ENCODE measurements at regions of chr20 and their contacts with region 1.

Region 1: GRCh38 chr20:297098-297924 is at the start of gene ZCCHC3:
- DNase-seq: peak; percentile 91
- CTCF ChIP-seq: peak; percentile 25

Region 2: DNA sequence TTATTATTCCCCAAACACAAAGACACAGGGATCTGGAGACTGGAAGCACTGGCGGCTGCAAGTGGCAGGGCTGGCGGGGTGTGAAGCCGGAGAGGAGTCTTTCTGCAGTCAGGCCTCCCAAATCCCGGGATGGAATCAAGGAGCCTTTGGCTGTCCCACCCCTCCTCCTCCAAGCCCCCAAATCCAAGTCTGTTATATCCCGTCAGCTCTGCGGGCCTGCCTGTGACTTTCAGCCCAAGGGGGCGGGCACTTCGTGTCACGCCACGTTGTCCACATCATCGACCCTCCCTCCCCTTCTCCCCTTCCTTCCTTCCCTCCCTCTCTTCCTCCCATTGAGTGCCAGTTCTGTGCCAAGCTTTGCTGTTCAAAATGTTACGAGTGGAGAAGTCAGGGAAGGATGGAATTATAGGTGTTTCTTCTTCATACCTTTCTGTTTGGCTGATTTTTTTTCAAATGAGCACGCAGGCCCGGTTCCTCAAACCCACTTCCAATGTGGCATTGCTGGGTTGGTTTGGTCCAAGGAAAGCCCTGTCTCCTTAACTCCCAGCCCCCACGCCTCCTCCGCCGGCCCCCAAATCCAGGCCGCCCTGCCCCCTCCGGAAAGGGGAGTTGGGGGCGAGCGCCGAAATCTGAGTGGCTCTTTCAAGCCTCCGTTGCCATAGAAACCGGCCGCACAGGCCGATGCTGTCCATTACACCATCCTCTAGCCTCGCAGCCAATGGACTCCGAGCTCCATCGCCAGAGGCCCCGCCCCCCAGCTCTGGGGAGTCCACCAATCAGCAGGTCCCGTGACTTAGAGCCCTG is 12.7 kb after region 1 on chr20:
- CTCF ChIA-PET with region 1: interaction called, 11 read pairs
- POLR2A ChIA-PET with region 1: interaction called, 7 read pairs
- DNase-seq: peak; percentile 92
- CTCF ChIP-seq: no peak

Measured in GM10248 (cell line).